Left ventricle myocardium superior (tissue), 1 donor: ENCODE measurements at regions of chr20 and their contacts with region 1.

Region 1: DNA sequence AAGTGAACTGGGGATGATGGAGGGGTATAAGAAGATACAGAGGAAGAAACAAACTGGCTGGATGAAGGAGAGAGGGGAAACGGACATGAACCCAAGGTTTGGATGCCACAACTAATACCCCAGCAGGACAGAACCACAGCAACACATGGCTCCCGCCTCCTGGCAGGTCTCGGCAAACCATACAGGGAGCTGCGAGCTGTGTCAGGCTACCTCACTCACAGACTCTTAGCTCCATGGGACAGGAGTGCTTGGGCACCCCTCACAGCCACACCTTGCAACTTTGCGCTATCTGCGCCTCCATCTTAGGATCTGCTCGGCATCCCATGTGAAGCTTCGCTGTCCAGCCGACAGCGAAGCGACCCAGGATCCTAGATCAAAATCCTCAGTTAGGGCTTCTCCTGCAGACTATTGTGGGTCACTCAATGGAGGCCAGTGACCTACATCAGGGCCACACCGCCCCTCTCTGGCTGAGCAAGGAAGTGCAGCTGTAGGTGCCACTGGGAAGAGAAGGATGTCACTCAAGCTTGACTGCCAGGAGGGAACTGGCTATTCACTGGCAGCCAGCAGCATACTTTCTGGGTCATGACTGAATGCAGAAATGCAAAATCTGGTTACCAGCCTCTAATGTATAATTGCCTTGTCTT is 174.4 kb upstream of the RIN2 start:
- DNase-seq: peak; percentile 81
- ATAC-seq: peak; percentile 89

Region 2: DNA sequence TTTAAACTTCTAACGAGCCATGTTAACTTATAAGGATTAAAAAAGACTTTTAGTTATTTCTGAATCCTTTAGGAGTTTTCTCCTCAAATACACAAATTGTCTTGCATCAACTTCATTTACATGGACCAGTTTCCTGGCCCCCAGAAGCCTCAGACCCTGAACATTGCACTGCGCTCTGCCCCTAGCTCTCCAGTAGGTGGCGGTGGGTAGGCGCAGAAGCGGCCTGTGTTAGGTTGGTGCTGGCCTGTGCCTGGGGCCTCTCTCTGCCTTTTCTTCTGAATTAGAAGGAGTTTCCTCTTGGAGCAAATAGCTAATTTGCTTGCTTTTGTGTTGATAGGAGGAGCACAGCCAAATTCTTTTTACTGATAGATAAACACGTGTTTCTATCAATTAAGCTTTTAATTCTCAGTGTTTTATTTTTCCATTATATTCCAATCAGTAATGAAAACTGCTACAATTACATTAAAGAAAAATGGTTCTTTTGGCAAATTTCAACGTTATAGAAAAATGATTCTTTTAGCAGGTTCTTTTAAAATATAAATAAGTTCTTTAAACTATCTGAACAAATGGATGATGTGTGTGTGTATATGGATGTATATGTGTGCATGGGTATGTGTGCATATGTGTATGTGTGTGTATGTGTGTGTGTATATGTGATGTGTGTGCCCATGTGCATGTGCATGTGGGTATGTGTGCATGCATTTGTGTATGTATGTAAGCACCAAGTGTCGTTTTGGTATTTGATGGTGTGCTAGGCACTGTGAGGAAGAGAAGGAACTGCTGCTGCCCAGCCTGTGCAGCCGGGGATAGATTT is 951.3 kb before region 1 on chr20:
- intact Hi-C with region 1: loop called (anchors 10 kb)
- DNase-seq: peak; percentile 59
- ATAC-seq: peak; percentile 90

Region 3: DNA sequence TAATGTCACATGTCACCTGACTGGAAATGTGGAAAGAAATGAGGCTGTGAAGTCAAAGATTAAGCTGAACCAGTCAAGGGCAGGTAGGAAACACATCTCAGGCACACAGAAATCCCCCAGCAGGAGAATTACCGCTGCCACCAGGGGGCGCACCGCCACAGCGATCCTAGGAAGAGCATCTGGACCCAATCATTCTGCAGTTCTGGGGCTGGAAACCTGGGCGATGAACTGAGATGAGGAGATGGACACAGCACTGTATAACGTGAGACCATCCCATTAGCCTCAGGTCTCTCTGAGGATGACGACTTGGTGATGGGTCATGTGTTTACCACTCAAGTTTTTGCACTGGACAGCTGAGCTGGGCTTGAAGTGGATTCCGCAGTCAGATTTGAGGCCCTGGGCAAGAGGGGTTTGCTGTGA is 377.7 kb before region 1 on chr20:
- intact Hi-C with region 1: loop called (anchors 10 kb)
- DNase-seq: peak; percentile 86
- ATAC-seq: peak; percentile 71

Region 4: GRCh38 chr20:19661717-19662636 is 78.3 kb after region 1 on chr20:
- intact Hi-C with region 1: no loop called
- DNase-seq: peak; percentile 56
- ATAC-seq: peak; percentile 74

Region 5: GRCh38 chr20:20003031-20003954 is 419.6 kb after region 1 on chr20:
- intact Hi-C with region 1: no loop called
- DNase-seq: no peak
- ATAC-seq: peak; percentile 70